Caco-2 (cell line): ENCODE measurements at regions of chr20 and their contacts with region 1.

Region 1: GRCh38 chr20:33686100-33686983 is at the start of gene E2F1:
- DNase-seq: peak; percentile 99 to 100
- H3K4me3 ChIP-seq: peak within 1 kb of the TSS; percentile 80
- H3K4me3 Mint-ChIP-seq: peak within 1 kb of the TSS; percentile 68
- H3K27ac Mint-ChIP-seq: peak within 1 kb of the TSS; percentile 78
- H3K4me1 ChIP-seq: peaks cover 46% of the 10 kb centered on the region
- H3K4me1 Mint-ChIP-seq: peaks cover 59% of the 10 kb centered on the region
- H3K27me3 ChIP-seq: no peaks in the 10 kb centered on the region
- H3K27me3 Mint-ChIP-seq: no peaks in the 10 kb centered on the region
- CTCF ChIP-seq: peak; percentile 56 to 64
- total RNA-seq, gene E2F1: 67.5 and 74.7 TPM in 2 replicates

Region 2: GRCh38 chr20:33640297-33640696 is 46.0 kb before region 1 on chr20:
- CTCF ChIA-PET with region 1: no interaction called
- POLR2A ChIA-PET with region 1: no interaction called
- intact Hi-C with region 1: no loop called
- DNase-seq: peak in 1 of 2 experiments; percentile 67
- H3K4me3 ChIP-seq: no peak overlapping the region
- H3K4me3 Mint-ChIP-seq: no peak overlapping the region
- H3K27ac Mint-ChIP-seq: no peak overlapping the region
- H3K4me1 ChIP-seq: peaks cover 9% of the 10 kb centered on the region; the same call in 1 of the 2 replicates
- H3K4me1 Mint-ChIP-seq: no peaks in the 10 kb centered on the region
- H3K27me3 ChIP-seq: no peaks in the 10 kb centered on the region
- H3K27me3 Mint-ChIP-seq: no peaks in the 10 kb centered on the region
- CTCF ChIP-seq: no peak

Region 3: DNA sequence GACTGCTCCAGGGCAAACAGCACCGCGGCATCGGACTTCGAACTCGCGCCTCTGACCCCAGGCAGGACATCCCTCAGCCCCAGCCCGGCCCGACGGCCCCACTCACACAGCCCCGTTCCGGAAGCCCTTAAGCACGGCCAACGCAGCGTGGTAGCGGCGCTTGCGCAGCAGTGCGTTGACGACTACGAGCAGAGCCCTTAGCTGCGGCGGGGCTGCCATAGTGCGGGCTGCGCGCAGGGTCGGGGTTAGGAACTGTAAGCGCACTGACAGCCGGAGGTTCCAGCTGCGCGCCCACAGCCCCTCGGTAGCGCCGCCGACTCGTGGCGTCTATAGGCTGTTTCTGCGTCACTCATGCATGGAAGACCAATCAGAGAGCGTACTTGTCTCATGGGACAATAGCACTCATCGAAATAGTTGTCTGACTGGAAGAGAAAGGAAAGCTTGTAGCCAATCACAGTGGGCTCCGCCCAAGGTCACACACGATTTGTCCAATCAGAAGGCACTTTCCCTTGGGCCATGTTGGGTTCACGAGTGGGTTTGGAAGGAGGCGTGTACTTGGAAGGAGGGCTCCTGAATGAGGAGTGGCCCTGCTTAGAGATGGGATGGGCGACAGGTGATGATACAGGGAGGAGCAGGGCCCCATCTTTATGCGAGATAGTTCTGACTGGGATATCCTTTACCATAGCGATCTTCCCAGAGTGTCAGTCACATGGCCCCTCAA is 33.8 kb after region 1 on chr20 and contains the start of gene PXMP4:
- CTCF ChIA-PET with region 1: interaction called, 5 read pairs
- POLR2A ChIA-PET with region 1: interaction called, 7 read pairs
- intact Hi-C with region 1: loop called (anchors 1 kb)
- DNase-seq: peak; percentile 99 to 100
- H3K4me3 ChIP-seq: peak within 1 kb of the TSS; percentile 65
- H3K4me3 Mint-ChIP-seq: peak within 1 kb of the TSS; percentile 71
- H3K27ac Mint-ChIP-seq: peak within 1 kb of the TSS; percentile 33
- H3K4me1 ChIP-seq: peaks cover 22% of the 10 kb centered on the region
- H3K4me1 Mint-ChIP-seq: no peaks in the 10 kb centered on the region
- H3K27me3 ChIP-seq: no peaks in the 10 kb centered on the region
- H3K27me3 Mint-ChIP-seq: no peaks in the 10 kb centered on the region
- CTCF ChIP-seq: no peak
- total RNA-seq, gene PXMP4: 37.3 and 39.5 TPM in 2 replicates